Activated CD4-positive, alpha-beta T cell treated with anti-CD3 and anti-CD28 coated beads, Interleukin-2, amount 10 ng/mL, durations not matched to agents 7 days and 5 days (primary cell): ENCODE measurements at regions of chr12 and their contacts with region 1.

Region 1: GRCh38 chr12:64218597-64218996 is 3.5 kb downstream of the KICS2 start:
- DNase-seq: no peak
- H3K4me3 Mint-ChIP-seq: peak overlapping the region; percentile 42
- H3K27ac Mint-ChIP-seq: peak overlapping the region; percentile 57
- H3K4me1 Mint-ChIP-seq: peaks cover 41% of the 10 kb centered on the region
- H3K27me3 Mint-ChIP-seq: no peaks in the 10 kb centered on the region

Region 2: DNA sequence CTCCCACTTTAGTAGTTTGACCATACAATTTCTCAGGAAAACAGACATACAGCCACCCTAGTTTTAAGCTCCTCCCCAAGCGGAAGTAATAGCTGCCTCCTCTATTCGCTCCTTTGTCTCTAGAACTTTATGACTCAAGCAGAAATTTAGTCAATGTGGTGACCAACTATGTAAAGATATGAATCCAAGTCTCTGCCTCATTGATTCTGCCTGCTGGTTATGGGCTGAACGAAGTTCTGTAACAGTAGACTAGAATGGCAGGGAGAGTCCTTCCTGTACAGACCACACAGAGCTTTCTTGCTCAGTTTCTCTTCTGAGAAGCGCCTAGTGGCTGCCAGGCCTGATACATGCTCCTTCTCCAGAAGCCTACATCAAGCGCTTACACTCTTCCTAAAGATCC is 15.6 kb before region 1 on chr12:
- CTCF ChIA-PET with region 1: interaction called, 11 read pairs
- POLR2A ChIA-PET with region 1: no interaction called
- DNase-seq: no peak
- H3K4me3 Mint-ChIP-seq: no peak overlapping the region
- H3K27ac Mint-ChIP-seq: no peak overlapping the region
- H3K4me1 Mint-ChIP-seq: no peaks in the 10 kb centered on the region
- H3K27me3 Mint-ChIP-seq: no peaks in the 10 kb centered on the region